ENCODE measurements at regions of chr12 and their contacts with region 1.

Region 1: GRCh38 chr12:53220801-53221202 is 11.2 kb downstream of the RARG start:
- DNase-seq: peak; percentile 93
- ATAC-seq: peak; percentile 57
- H3K4me3 Mint-ChIP-seq: peak overlapping the region; percentile 83
- H3K27ac Mint-ChIP-seq: peak overlapping the region; percentile 87
- H3K4me1 Mint-ChIP-seq: peaks cover 78% of the 10 kb centered on the region
- H3K27me3 Mint-ChIP-seq: no peaks in the 10 kb centered on the region

Region 2: DNA sequence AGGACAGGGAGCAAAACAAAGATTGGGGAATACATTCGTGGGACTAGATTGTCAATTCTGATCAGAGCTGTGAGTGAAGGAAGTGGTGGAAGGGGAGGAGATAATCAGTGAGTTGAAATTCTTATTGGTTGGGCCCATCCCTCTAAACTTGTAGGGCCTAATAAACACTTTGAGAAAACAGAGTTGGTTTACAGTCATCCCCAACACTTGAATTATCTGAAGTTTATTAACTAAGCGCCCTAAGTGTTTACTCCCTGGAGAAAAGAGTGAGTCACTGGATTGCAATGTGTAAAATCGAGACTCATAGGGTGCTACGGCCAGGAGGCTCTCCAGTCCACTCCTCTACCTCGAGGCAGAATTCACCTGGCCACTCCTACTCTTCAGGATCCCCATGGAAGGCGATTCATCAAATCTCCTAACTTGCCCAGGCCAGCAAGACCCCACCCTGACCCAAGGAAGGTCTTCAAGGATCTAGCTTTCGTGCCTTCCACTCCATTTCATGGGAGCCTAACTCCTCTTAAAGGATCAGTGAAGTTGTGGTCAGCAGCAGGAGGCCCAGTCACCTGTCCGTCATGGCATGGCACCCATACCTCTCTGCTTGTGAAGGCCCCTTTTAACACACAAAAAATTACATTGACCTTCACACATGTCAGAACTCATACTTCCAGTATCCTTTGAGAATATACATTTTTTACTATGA is 421.6 kb before region 1 on chr12:
- CTCF ChIA-PET with region 1: no interaction called
- POLR2A ChIA-PET with region 1: no interaction called
- intact Hi-C with region 1: no loop called
- DNase-seq: no peak
- ATAC-seq: no peak
- H3K4me3 Mint-ChIP-seq: no peak overlapping the region
- H3K27ac Mint-ChIP-seq: no peak overlapping the region
- H3K4me1 Mint-ChIP-seq: peaks cover 5% of the 10 kb centered on the region
- H3K27me3 Mint-ChIP-seq: no peaks in the 10 kb centered on the region

Region 3: GRCh38 chr12:52980693-52981423 is 239.9 kb before region 1 on chr12:
- CTCF ChIA-PET with region 1: no interaction called
- POLR2A ChIA-PET with region 1: no interaction called
- intact Hi-C with region 1: no loop called
- DNase-seq: peak; percentile 89
- ATAC-seq: peak; percentile 95
- H3K4me3 Mint-ChIP-seq: no peak overlapping the region
- H3K27ac Mint-ChIP-seq: no peak overlapping the region
- H3K4me1 Mint-ChIP-seq: no peaks in the 10 kb centered on the region
- H3K27me3 Mint-ChIP-seq: peaks cover 26% of the 10 kb centered on the region

Region 4: DNA sequence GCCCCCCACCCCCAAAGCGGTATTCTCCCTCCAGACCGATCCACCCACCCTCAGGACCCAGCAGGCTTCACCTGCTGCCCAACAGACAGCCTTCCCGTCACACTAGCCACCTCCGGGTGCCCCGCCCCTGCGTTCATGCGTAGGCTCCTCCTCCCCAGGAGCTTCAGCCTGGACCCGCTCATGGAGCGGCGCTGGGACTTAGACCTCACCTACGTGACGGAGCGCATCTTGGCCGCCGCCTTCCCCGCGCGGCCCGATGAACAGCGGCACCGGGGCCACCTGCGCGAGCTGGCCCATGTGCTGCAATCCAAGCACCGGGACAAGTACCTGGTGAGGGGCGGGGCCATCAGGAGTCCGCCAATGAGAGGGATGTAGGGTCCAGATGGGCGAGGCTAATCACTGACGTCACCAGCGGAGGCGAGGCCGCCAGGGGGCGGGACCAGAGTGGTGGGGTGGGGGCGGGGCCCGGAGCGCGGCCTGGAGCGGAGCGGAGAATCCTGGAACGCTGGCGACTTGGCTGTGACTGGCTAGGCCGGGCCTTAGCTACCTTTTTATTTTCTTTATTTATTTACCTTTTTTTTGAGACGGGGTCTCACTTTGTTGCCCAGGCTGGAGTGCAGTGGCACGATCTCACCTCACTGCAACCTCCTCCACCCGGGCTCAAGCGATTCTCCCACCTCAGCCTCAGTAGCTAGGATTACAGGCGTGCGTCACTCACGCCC is 166.5 kb before region 1 on chr12:
- CTCF ChIA-PET with region 1: no interaction called
- POLR2A ChIA-PET with region 1: no interaction called
- intact Hi-C with region 1: no loop called
- DNase-seq: peak; percentile 96
- ATAC-seq: peak; percentile 94
- H3K4me3 Mint-ChIP-seq: peak overlapping the region; percentile 86
- H3K27ac Mint-ChIP-seq: peak overlapping the region; percentile 84
- H3K4me1 Mint-ChIP-seq: peaks cover 14% of the 10 kb centered on the region
- H3K27me3 Mint-ChIP-seq: no peaks in the 10 kb centered on the region

Region 5: GRCh38 chr12:53200458-53201176 is 20.2 kb before region 1 on chr12:
- CTCF ChIA-PET with region 1: interaction called, 11 read pairs
- POLR2A ChIA-PET with region 1: no interaction called
- intact Hi-C with region 1: no loop called
- DNase-seq: peak; percentile 68
- ATAC-seq: peak; percentile 52
- H3K4me3 Mint-ChIP-seq: peak overlapping the region; percentile 44
- H3K27ac Mint-ChIP-seq: peak overlapping the region; percentile 90
- H3K4me1 Mint-ChIP-seq: peaks cover 74% of the 10 kb centered on the region
- H3K27me3 Mint-ChIP-seq: no peaks in the 10 kb centered on the region

Region 6: GRCh38 chr12:53231826-53232645 is 11.2 kb after region 1 on chr12 and contains the start of gene RARG:
- CTCF ChIA-PET with region 1: interaction called, 4 read pairs
- POLR2A ChIA-PET with region 1: interaction called, 6 read pairs
- intact Hi-C with region 1: loop called (anchors 1 kb)
- DNase-seq: peak; percentile 83
- ATAC-seq: peak; percentile 75
- H3K4me3 Mint-ChIP-seq: peak within 1 kb of the TSS; percentile 81
- H3K27ac Mint-ChIP-seq: peak within 1 kb of the TSS; percentile 84
- H3K4me1 Mint-ChIP-seq: peaks cover 77% of the 10 kb centered on the region
- H3K27me3 Mint-ChIP-seq: no peaks in the 10 kb centered on the region
- total RNA-seq, gene RARG: 20.0 to 21.6 TPM

Region 7: DNA sequence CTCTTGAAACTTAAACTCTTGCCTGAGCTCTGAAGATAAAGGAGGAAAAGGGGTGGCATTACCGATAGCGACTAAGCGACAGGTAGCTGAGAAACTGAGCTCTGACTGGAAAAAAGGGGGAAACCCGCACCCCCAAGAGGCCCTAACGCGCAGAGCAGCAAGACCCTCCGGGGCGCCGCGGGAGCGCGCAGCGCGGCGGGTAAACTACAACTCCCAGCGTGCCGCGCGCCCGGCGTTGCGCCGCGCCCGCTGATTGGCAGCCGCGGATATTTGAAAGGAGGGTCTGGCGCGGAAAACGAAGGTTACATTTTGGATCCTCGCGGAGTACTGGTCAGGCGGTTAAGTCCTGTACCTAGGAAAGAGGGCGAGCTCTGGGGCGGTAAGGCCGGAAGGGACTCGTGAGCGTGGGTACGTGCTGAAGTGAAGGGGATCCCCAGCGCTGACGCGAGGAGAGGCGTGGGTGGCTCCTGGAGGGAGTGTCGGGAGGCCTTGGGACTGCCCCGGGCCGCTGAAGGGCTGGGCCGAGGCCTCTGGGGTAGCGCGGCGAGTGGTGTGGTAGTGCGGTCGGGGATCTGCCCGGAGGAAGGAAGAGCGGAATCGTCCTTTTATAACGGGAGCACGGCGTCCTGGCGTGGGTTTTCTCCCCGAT is 47.3 kb after region 1 on chr12 and contains the start of gene ESPL1:
- CTCF ChIA-PET with region 1: interaction called, 113 read pairs
- POLR2A ChIA-PET with region 1: interaction called, 6 read pairs
- intact Hi-C with region 1: loop called (anchors 1 to 2 kb)
- DNase-seq: peak; percentile 93
- ATAC-seq: peak; percentile 86
- H3K4me3 Mint-ChIP-seq: peak within 1 kb of the TSS; percentile 92
- H3K27ac Mint-ChIP-seq: peak within 1 kb of the TSS; percentile 98
- H3K4me1 Mint-ChIP-seq: peaks cover 30% of the 10 kb centered on the region
- H3K27me3 Mint-ChIP-seq: no peaks in the 10 kb centered on the region
- total RNA-seq, gene ESPL1: 60.8 to 66.9 TPM

Region 8: GRCh38 chr12:53441040-53441833 is 220.4 kb after region 1 on chr12 and contains the start of gene PRR13:
- CTCF ChIA-PET with region 1: no interaction called
- POLR2A ChIA-PET with region 1: no interaction called
- intact Hi-C with region 1: loop called in 1 of 2 experiments (anchors 1 kb)
- DNase-seq: peak; percentile 100
- ATAC-seq: peak; percentile 99
- H3K4me3 Mint-ChIP-seq: peak within 1 kb of the TSS; percentile 92
- H3K27ac Mint-ChIP-seq: peak within 1 kb of the TSS; percentile 95
- H3K4me1 Mint-ChIP-seq: peaks cover 30% of the 10 kb centered on the region
- H3K27me3 Mint-ChIP-seq: no peaks in the 10 kb centered on the region
- total RNA-seq, gene PRR13: 250 to 266 TPM

Region 9: DNA sequence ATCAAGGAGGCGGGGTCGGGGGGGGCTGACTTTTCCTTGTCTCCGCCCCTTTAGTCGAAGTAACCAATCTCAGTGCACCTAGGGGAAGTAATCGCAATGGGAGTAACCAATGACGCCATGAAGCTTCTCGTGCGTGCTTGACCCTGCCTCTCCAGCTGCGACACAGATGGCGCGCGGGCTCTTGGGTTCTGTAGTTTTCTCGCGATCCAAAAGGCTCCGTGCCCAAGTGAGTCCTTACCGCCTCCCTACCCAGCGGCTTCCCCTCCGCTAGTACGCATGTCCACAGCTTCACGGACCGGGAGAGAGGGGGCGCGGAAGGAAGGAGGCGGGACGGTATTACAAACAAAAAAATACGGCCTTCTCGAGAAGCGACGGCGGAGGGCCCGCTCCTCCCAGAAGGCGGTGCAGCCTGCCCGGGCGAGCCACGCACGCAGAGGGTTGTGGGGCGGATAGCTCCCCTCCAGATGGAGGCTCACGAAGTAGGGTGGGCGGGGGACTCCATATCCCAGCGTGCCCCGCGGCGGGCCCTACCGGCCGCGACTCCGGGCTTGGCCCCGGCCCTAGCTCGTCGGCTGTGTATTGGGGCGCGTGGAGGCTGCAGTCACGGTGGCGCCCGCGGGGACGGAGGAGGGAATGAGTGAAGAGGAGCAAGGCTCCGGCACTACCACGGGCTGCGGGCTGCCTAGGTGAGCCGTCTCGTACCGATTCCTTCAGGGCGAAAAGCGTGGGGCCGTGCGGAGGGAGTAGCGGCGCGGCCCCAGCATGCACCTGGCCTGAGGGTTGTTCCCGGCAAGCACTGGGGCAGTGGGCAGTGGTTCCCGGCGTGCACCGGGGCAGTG is 280.2 kb after region 1 on chr12 and contains the start of gene TARBP2:
- CTCF ChIA-PET with region 1: no interaction called
- POLR2A ChIA-PET with region 1: no interaction called
- intact Hi-C with region 1: loop called in 1 of 2 experiments (anchors 2 kb)
- DNase-seq: peak; percentile 98
- ATAC-seq: peak; percentile 84
- H3K4me3 Mint-ChIP-seq: peak within 1 kb of the TSS; percentile 81
- H3K27ac Mint-ChIP-seq: peak within 1 kb of the TSS; percentile 98
- H3K4me1 Mint-ChIP-seq: peaks cover 31% of the 10 kb centered on the region
- H3K27me3 Mint-ChIP-seq: no peaks in the 10 kb centered on the region
- total RNA-seq, gene TARBP2: 28.3 to 30.2 TPM